Panc1 (cell line): ENCODE measurements at regions of chr15 and their contacts with region 1.

Region 1: DNA sequence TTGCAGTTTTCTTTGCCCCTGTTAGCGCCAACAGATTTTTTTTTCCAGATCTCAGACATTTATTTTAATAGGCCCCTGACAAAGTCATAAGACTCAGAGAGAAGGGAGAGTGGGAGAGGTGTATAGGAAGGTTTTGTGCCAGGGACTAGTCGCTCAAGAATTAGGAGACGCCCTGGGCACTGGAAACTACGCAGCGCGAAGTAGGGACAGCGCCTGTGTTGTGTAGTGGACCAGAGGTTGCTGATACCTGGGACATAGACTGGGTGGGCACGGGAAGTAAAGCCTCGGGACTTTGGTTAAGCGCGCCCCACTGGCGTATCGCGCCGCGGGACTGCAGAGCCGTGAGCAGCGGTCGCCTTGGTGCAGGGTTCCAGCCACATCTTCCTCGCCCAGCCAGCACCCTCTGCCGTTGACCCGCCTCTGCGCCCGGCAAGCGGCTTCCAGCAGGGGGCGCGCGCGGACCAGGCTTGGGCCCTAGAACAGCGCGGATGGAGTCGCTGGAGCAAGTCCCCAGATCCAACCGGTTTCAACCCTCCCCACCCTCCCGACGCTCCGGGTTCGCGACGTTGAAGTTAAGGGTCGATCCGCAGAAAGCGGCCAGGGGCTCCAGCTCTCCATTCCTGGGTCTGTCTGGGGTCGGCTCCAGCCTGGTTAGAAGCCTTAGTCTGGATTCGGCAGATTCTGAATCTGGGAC is 3.0 kb upstream of the ISLR2 start:
- DNase-seq: peak; percentile 27
- ATAC-seq: peak; percentile 96
- H3K4me3 ChIP-seq: peak overlapping the region; percentile 41 to 63
- H3K27ac ChIP-seq: no peak overlapping the region
- H3K4me1 ChIP-seq: peaks cover 14% of the 10 kb centered on the region
- H3K27me3 ChIP-seq: peaks cover 16% of the 10 kb centered on the region
- CTCF ChIP-seq: peak; percentile 99

Region 2: DNA sequence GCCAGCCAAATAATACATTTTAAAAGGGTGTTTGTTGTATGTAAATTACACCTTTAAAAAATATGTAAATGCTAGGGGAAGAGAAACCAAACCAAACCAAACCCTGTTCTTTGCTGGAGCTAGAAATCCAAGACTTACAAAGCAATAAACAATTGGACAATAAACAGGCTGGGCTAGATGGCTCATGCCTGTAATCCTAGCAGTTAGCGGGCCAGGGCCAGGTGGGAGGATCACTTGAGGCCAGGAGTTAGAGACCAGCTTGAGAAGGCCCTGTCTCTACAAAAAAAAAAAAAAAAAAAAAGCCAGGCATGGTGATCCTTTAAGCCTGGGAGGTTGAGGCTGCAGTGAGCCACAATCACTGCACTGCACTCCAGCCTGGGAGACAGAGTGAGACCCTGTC is 147.8 kb before region 1 on chr15:
- CTCF ChIA-PET with region 1: no interaction called
- POLR2A ChIA-PET with region 1: no interaction called
- in situ Hi-C with region 1: no loop called
- intact Hi-C with region 1: no loop called
- DNase-seq: no peak
- ATAC-seq: no peak
- H3K4me3 ChIP-seq: no peak overlapping the region
- H3K27ac ChIP-seq: no peak overlapping the region
- H3K4me1 ChIP-seq: peaks cover 10% of the 10 kb centered on the region; the same call in 1 of the 2 replicates
- H3K27me3 ChIP-seq: no peaks in the 10 kb centered on the region
- CTCF ChIP-seq: no peak

Region 3: DNA sequence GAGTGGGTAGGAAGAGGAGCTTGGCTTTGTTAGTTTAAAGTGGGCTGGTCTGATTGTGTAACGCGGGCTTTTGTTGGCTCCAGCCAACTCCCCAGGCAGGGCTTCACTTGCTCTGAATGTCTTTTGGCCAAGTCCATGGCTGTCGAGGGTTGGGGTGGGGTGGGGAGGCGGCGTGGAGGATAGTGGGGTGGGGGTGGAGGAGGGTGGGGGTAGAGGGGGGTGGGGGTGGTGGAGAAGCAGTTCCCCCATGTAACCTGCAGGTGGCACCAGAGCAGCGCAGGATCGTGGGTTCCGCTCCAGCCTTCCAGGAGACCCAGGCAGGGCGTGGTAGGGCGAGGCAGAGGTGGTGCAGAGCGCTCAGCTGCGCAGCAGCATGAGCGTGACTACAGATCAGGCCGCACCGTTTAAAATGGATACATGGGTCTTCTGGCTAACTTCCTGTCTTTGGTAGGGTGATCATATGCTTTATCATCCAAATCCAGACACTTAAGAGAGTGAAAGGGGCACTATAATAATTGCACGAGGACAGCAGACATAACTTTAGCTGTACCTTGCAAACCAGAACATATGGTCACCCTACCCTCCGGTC is 73.4 kb before region 1 on chr15:
- CTCF ChIA-PET with region 1: interaction called, 5 read pairs
- POLR2A ChIA-PET with region 1: no interaction called
- in situ Hi-C with region 1: no loop called
- intact Hi-C with region 1: loop called (anchors 5 kb)
- DNase-seq: no peak
- ATAC-seq: peak; percentile 96
- H3K4me3 ChIP-seq: peak overlapping the region; percentile 7 to 31; a peak in 2 of 4 replicates
- H3K27ac ChIP-seq: no peak overlapping the region
- H3K4me1 ChIP-seq: no peaks in the 10 kb centered on the region
- H3K27me3 ChIP-seq: peaks cover 2% of the 10 kb centered on the region; the same call in 1 of the 2 replicates
- CTCF ChIP-seq: peak; percentile 88

Region 4: DNA sequence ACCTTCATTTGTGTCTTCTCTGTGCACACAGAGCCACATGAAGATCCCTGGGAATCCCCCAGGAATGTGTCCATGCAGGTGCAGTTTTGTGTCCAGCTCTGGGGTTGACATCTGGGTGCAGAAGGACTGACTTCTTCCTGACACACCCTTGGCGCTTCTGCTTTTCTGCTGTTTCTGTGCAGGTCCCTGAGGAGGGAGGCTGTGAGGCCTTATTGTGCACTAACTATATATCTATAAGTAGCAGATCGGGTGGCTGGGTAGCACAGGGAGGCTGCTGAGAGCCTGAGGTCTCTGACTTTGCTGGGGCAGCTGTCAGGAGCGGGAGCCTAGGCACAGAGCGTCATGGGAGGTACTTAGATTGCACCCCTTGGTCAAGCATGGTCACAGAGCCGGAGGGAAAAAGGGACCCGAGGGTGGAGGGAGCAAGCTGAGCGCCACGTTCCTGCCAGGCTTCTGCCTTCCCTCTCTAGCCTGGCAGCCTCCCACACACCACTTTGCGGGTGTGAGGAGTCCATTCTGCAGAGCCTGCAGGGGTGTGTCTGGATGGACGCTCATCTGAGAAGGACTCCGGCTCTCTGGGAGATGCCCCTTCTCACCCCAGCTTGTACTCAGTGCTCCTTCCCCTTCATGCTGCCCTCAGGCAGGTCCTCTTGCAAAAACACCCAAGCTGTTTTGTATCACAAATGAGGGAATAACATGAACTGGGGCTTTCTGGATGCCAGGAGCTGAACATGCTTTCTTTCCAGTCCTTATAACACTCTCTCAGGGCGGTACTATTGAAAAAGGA is 132.6 kb after region 1 on chr15:
- CTCF ChIA-PET with region 1: no interaction called
- POLR2A ChIA-PET with region 1: interaction called, 20 read pairs
- in situ Hi-C with region 1: no loop called
- intact Hi-C with region 1: no loop called
- DNase-seq: no peak
- ATAC-seq: no peak
- H3K4me3 ChIP-seq: no peak overlapping the region
- H3K27ac ChIP-seq: no peak overlapping the region
- H3K4me1 ChIP-seq: no peaks in the 10 kb centered on the region
- H3K27me3 ChIP-seq: no peaks in the 10 kb centered on the region; the same call in 1 of the 2 replicates
- CTCF ChIP-seq: no peak

Region 5: DNA sequence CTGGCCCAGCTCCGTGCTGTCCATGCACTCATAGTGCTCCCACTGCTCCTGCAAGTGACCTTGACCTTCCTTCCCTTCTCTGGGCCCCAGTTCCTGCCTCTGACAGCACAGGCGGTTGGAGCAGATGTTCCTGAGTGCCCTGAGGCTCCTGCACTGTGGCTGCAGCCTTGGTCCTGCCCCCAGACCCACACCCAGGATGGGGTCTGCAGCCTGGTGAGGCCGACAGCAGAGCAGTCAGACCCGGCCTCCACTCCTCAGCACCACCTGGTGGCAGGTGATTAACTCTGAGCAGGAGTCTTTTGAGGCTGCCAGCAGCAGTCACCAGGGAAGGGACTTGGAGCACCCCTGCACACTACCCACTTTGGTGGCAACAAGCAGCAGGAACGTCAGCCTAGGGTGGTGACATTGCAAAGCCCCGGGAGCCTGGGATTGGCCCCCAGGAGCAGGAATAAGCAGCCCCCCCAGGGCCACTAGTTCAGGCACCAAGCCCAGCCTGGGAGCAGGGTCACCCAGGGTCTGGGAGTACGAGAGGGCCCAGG is 175.5 kb after region 1 on chr15:
- CTCF ChIA-PET with region 1: interaction called, 53 read pairs
- POLR2A ChIA-PET with region 1: no interaction called
- in situ Hi-C with region 1: no loop called
- intact Hi-C with region 1: loop called (anchors 1 kb)
- DNase-seq: no peak
- ATAC-seq: peak; percentile 81
- H3K4me3 ChIP-seq: no peak overlapping the region
- H3K27ac ChIP-seq: no peak overlapping the region
- H3K4me1 ChIP-seq: no peaks in the 10 kb centered on the region; the same call in 1 of the 2 replicates
- H3K27me3 ChIP-seq: no peaks in the 10 kb centered on the region
- CTCF ChIP-seq: peak; percentile 90

Region 6: DNA sequence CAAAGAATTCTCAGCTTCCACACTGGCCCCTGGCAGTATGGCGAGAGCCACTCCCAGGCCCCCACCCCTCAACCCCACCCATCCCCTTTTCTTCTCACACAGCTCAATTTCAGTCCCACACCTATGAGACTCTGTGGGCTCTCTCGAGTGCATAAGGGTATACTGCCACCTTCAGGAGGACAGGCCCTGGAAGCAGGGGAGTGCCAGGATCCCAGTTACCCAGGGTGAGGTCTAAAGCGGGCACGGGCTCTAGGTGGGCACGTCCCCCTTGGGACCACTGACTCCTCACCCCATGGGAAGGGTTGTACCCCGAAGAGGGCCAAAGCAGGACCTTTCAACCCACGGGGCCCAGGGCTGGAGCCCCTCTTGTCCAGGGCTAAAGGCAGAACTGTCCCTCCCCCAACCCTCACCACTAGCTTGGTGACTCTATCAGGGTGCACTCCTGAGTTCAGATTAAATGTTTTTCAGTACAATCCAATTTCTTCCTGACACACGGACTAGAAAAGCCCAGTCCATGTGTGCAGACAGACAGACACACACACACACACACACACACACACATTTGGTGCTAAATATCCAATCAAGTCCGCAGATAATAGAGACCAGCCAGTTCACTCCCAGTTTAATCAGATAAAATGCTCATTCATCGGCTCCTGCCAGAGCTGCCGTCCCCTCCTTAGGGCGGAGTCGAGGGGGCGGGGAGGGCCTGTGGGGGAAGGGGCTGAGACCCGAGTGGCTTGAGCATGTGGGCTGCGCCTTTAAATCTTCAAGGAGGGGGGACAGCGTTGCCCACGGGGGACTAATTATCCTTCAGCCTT is 180.6 kb after region 1 on chr15:
- CTCF ChIA-PET with region 1: interaction called, 53 read pairs
- POLR2A ChIA-PET with region 1: no interaction called
- in situ Hi-C with region 1: no loop called
- intact Hi-C with region 1: loop called (anchors 1 kb)
- DNase-seq: no peak
- ATAC-seq: peak; percentile 88
- H3K4me3 ChIP-seq: no peak overlapping the region
- H3K27ac ChIP-seq: no peak overlapping the region
- H3K4me1 ChIP-seq: no peaks in the 10 kb centered on the region; the same call in 1 of the 2 replicates
- H3K27me3 ChIP-seq: no peaks in the 10 kb centered on the region
- CTCF ChIP-seq: peak; percentile 90

Region 7: GRCh38 chr15:74396445-74397238 is 269.2 kb after region 1 on chr15:
- CTCF ChIA-PET with region 1: no interaction called
- POLR2A ChIA-PET with region 1: no interaction called
- in situ Hi-C with region 1: no loop called
- intact Hi-C with region 1: no loop called
- DNase-seq: peak; percentile 86
- ATAC-seq: peak; percentile 84
- H3K4me3 ChIP-seq: no peak overlapping the region
- H3K27ac ChIP-seq: no peak overlapping the region
- H3K4me1 ChIP-seq: no peaks in the 10 kb centered on the region; the same call in 1 of the 2 replicates
- H3K27me3 ChIP-seq: no peaks in the 10 kb centered on the region
- CTCF ChIP-seq: no peak